ENCODE measurements at regions of chr2 and their contacts with region 1.

Region 1: DNA sequence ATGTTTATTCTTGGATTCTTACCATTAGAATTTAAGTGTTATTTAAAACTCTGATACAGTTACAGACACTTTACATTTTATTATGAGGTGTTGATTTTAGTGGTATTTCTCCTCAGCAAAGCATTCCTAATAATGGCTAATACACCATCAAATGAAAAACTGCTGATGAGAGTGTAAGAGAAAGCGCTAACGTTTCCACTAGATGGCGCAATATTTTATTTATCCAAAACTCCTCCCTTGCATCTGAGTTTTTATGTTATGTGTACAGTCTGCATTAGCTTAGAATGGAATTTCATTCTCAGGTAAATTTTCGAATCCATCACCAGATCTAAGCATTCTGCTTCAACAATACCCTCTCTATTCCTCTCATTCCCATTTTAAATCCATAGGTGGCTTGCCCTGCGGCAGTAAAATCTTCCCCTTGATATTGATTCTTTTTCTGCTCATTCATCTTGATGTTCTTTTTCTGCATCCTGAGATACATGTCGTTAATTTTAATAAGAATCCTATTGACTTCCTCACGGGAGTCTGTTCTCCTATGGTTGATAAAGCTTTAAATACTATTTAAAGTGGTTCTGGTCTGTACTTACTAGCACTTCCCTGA is 53.9 kb downstream of the PRKRA start:
- DNase-seq: peak; percentile 44
- H3K4me3 ChIP-seq: no peak overlapping the region
- H3K27ac ChIP-seq: no peak overlapping the region
- H3K4me1 ChIP-seq: peaks cover 0 to 3% of the 10 kb centered on the region in 2 experiments; a peak in 1 of 4 replicates
- H3K27me3 ChIP-seq: no peaks in the 10 kb centered on the region
- CTCF ChIP-seq: peak; percentile 78
- EP300 ChIP-seq: no peak
- RAD21 ChIP-seq: peak; percentile 64

Region 2: DNA sequence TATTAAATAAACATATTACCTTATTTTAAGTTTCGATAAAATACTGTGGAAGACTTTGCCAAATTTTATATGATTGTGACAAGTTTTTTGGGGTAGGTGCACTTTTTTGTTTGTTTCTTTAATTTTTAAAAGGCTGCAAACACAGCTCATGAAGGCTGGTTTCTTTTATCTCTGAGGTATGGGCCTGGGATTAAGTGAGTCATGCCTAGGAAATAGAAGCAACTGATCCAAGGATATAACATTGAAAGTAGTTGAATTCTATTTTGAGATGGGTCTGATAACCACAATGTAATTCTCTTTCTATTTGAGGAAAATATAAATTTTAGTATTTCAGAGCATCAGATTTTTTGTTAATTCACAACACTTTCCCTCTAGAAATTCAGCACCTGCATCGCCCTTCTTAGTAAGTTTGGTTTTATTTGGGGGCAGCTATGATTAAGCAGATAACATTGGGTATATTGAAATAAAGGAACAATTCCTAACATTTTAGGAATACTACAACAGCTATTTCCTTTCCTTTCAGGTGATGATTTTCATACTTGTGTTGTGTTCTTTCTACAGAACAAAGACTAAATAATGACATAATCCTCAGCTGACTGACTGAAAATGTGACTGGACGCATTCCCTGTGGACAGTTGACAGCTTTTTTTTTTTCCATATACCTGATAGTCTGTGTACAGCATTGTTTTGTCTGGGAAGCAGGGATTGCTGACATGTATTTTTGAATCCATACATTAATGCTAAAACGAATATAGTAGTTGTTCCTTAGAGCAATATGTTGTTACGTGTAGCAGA is 268.1 kb before region 1 on chr2:
- CTCF ChIA-PET with region 1: interaction called, 13 read pairs
- POLR2A ChIA-PET with region 1: no interaction called
- DNase-seq: no peak
- H3K4me3 ChIP-seq: no peak overlapping the region
- H3K27ac ChIP-seq: no peak overlapping the region
- H3K4me1 ChIP-seq: no peaks in the 10 kb centered on the region
- H3K27me3 ChIP-seq: no peaks in the 10 kb centered on the region
- CTCF ChIP-seq: no peak
- EP300 ChIP-seq: no peak
- RAD21 ChIP-seq: no peak

Region 3: DNA sequence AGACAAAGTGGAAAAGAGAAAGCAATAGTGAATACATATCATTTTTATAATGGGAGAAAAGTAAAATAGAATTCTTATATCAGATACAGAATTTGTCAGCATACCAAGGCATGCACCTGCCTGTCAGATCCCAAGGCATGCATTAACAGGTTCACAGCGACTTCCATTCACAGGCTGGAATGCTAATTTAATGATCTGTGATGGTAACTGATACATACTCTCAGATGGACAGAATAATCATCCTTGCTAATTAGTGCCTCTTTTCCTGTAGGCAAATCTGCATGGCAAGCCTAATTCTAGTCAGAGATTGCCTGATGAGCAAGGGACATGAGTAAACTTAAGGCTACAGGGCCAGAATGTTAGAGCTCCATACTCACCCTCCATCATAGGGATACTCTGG is 22.2 kb before region 1 on chr2:
- CTCF ChIA-PET with region 1: interaction called, 15 read pairs
- POLR2A ChIA-PET with region 1: no interaction called
- DNase-seq: no peak
- H3K4me3 ChIP-seq: no peak overlapping the region
- H3K27ac ChIP-seq: no peak overlapping the region
- H3K4me1 ChIP-seq: no peaks in the 10 kb centered on the region; a peak in 1 of 4 replicates
- H3K27me3 ChIP-seq: no peaks in the 10 kb centered on the region
- CTCF ChIP-seq: no peak
- EP300 ChIP-seq: no peak
- RAD21 ChIP-seq: no peak